CD4-positive, alpha-beta T cell (primary cell): ENCODE measurements at regions of chr13 and their contacts with region 1.

Region 1: GRCh38 chr13:23098161-23098907 is 82.4 kb upstream of the SGCG start:
- DNase-seq: no peak
- ATAC-seq: no peak
- H3K4me3 ChIP-seq: no peak overlapping the region
- H3K4me3 Mint-ChIP-seq: no peak overlapping the region
- H3K27ac ChIP-seq: no peak overlapping the region
- H3K27ac Mint-ChIP-seq: no peak overlapping the region
- H3K4me1 ChIP-seq: no peaks in the 10 kb centered on the region
- H3K4me1 Mint-ChIP-seq: no peaks in the 10 kb centered on the region
- H3K27me3 ChIP-seq: no peaks in the 10 kb centered on the region
- H3K27me3 Mint-ChIP-seq: no peaks in the 10 kb centered on the region
- CTCF ChIP-seq: no peak

Region 2: GRCh38 chr13:24851545-24851944 is 1753.2 kb after region 1 on chr13:
- CTCF ChIA-PET with region 1: no interaction called
- POLR2A ChIA-PET with region 1: no interaction called
- intact Hi-C with region 1: no loop called
- DNase-seq: no peak
- ATAC-seq: no peak
- H3K4me3 ChIP-seq: no peak overlapping the region
- H3K4me3 Mint-ChIP-seq: no peak overlapping the region
- H3K27ac ChIP-seq: no peak overlapping the region
- H3K27ac Mint-ChIP-seq: no peak overlapping the region
- H3K4me1 ChIP-seq: no peaks in the 10 kb centered on the region
- H3K4me1 Mint-ChIP-seq: no peaks in the 10 kb centered on the region
- H3K27me3 ChIP-seq: no peaks in the 10 kb centered on the region
- H3K27me3 Mint-ChIP-seq: peaks cover 20% of the 10 kb centered on the region
- CTCF ChIP-seq: no peak

Region 3: DNA sequence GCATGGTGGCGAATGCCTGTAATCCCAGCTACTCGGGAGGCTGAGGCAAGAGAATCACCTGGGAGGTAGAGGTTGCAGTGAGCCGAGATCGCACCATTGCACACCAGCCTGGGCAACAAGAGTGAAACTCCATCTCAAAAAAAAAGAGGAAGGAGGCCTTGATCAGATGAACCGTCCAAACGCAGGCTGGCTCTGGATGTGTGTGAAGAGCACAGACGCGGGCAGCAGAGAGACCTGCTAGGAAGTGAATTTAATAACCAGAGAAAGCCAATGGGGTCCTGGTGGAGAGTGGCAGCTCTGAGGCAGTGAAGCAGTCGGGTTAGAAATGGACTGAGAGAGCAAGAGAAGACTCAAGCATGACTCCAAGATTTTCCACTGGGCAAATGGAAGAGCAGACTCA is 1802.2 kb after region 1 on chr13:
- CTCF ChIA-PET with region 1: no interaction called
- POLR2A ChIA-PET with region 1: no interaction called
- intact Hi-C with region 1: loop called in 1 of 2 experiments (anchors 5 kb)
- DNase-seq: no peak
- ATAC-seq: no peak
- H3K4me3 ChIP-seq: no peak overlapping the region
- H3K4me3 Mint-ChIP-seq: no peak overlapping the region
- H3K27ac ChIP-seq: no peak overlapping the region
- H3K27ac Mint-ChIP-seq: no peak overlapping the region
- H3K4me1 ChIP-seq: no peaks in the 10 kb centered on the region
- H3K4me1 Mint-ChIP-seq: no peaks in the 10 kb centered on the region
- H3K27me3 ChIP-seq: no peaks in the 10 kb centered on the region
- H3K27me3 Mint-ChIP-seq: no peaks in the 10 kb centered on the region
- CTCF ChIP-seq: no peak